CD8-positive, alpha-beta memory T cell (primary cell): ENCODE measurements at regions of chr9 and their contacts with region 1.

Region 1: GRCh38 chr9:37913480-37914153 is 9.7 kb upstream of the SLC25A51 start:
- DNase-seq: peak; percentile 57 to 83 (median 65)
- H3K4me3 ChIP-seq: no peak overlapping the region
- H3K4me3 Mint-ChIP-seq: no peak overlapping the region
- H3K27ac ChIP-seq: no peak overlapping the region
- H3K27ac Mint-ChIP-seq: no peak overlapping the region
- H3K4me1 ChIP-seq: no peaks in the 10 kb centered on the region
- H3K4me1 Mint-ChIP-seq: peaks cover 0 to 3% (median 0%) of the 10 kb centered on the region in 3 donors
- H3K27me3 ChIP-seq: no peaks in the 10 kb centered on the region
- H3K27me3 Mint-ChIP-seq: peaks cover 2 to 4% of the 10 kb centered on the region in 2 donors

Region 2: DNA sequence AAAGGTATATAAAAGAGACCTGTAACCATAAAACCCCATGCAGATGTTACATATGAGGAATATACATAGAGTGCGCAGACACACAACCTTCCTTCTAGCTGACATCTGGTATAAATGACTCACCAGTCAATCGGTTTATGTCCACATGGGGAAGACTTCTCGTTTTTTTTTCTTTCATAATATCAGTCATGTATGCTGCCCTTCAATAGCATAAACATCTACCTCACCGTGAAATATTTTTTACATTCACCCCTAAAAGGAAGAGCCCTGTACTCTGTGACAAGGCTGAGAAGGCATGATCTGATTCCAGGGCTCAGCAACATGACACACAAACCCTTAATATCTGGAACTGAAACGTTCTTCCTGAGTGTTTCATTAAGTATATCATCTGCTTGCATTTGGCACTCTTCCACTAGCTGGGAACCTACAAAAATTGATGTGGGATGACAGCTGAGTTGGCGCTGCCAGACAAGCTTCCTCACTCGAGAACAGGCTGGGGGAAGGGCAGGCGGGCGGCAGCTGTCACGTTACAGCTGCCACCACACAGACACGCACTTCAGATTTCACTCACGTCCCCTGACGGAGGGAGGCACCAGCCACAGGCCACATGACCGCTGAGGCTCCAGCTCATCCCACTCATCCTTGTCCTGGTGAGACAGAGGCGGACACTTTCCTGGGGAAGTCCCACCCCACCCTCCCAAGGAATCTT is 81.2 kb after region 1 on chr9:
- CTCF ChIA-PET with region 1: no interaction called
- POLR2A ChIA-PET with region 1: no interaction called
- DNase-seq: no peak
- H3K4me3 ChIP-seq: no peak overlapping the region
- H3K4me3 Mint-ChIP-seq: no peak overlapping the region
- H3K27ac ChIP-seq: no peak overlapping the region
- H3K27ac Mint-ChIP-seq: peak overlapping the region in 1 of 8 donors; percentile 5
- H3K4me1 ChIP-seq: no peaks in the 10 kb centered on the region
- H3K4me1 Mint-ChIP-seq: peaks cover 0 to 7% (median 3%) of the 10 kb centered on the region in 3 donors
- H3K27me3 ChIP-seq: no peaks in the 10 kb centered on the region
- H3K27me3 Mint-ChIP-seq: peaks cover 1 to 13% of the 10 kb centered on the region in 2 donors

Region 3: DNA sequence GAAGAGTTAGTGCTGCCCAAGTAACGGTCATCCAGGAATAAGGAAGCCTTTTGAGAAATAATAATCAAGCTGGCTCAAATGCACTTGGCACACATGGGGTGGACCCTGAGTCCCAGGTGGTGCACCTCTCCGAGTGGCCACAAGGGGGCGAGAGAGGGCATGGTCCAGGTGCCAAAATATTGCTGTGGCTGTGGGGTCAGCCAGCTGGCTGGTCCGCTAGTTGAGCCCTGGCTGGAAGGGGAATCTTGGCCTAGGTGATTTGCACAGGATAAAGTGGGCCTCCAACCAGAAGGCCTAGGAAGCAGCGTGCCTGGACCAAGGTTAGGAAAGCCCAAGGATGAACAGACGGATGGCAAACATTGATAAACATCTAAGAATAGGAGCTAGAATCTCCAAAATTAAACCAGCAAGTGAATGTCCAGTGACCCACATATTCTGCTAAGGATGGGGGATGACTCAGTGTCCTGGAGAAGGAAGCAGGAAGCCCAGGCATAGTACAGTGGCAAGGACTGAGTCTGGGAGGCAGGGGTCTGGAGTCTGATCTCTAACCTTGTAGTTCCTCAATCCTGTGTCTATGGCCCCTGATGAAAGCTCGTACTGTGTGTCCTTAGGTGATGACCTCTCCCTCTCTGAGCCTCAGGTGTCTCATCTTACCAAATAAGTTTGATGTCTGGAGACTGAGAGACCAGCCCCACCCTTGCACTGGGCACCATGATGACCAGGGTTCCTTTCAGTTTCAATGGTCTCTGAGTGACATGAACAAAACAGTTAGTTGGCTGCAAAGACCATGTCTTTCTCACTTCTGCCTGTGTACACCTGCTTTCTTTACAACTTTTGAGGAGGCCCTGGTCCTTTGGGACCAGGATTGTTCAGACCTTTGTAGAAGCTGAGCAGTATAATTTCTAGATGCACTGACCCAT is 174.6 kb after region 1 on chr9:
- CTCF ChIA-PET with region 1: interaction called, 11 read pairs
- POLR2A ChIA-PET with region 1: no interaction called
- DNase-seq: peak; percentile 41 to 75 (median 60)
- H3K4me3 ChIP-seq: no peak overlapping the region
- H3K4me3 Mint-ChIP-seq: no peak overlapping the region
- H3K27ac ChIP-seq: no peak overlapping the region
- H3K27ac Mint-ChIP-seq: no peak overlapping the region
- H3K4me1 ChIP-seq: no peaks in the 10 kb centered on the region
- H3K4me1 Mint-ChIP-seq: peaks cover 0 to 3% (median 0%) of the 10 kb centered on the region in 3 donors
- H3K27me3 ChIP-seq: no peaks in the 10 kb centered on the region
- H3K27me3 Mint-ChIP-seq: peaks cover 5 to 37% of the 10 kb centered on the region in 2 donors

Region 4: DNA sequence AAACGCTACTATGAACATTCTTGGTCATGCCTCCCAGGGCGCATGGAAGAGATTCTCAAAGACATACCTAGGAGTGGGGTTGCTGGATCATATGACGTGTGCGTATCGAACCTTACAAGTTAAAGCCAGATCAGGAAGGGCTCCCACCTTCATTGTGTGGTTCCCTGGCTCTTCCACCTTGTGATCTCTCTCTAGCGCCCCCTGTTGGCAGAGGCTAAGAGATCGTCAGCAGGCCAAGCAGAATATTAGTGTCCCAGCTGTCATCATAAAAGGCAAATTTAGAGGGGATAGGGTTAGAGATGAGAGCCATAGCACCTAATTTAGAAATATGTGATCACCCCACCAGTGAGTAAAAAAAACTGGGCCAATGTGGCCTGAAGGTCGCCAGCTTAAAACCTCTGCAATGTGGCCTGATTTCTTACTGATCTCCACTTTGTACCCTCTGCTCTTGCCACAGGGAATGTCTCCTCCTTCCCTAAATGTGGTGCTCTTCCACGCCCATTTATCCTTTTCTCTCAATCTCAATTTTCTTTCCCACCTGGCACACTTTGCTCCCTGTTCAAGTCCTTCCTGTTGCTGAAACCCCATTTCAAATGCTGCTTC is 247.1 kb after region 1 on chr9:
- CTCF ChIA-PET with region 1: interaction called, 28 read pairs
- POLR2A ChIA-PET with region 1: no interaction called
- DNase-seq: peak; percentile 15 to 64 (median 38)
- H3K4me3 ChIP-seq: no peak overlapping the region
- H3K4me3 Mint-ChIP-seq: no peak overlapping the region
- H3K27ac ChIP-seq: no peak overlapping the region
- H3K27ac Mint-ChIP-seq: peak overlapping the region in 1 of 8 donors; percentile 17
- H3K4me1 ChIP-seq: no peaks in the 10 kb centered on the region
- H3K4me1 Mint-ChIP-seq: peaks cover 0 to 3% (median 2%) of the 10 kb centered on the region in 3 donors
- H3K27me3 ChIP-seq: no peaks in the 10 kb centered on the region
- H3K27me3 Mint-ChIP-seq: peaks cover 5 to 8% of the 10 kb centered on the region in 2 donors